ENCODE measurements at regions of chr3 and their contacts with region 1.

Region 1: GRCh38 chr3:33993631-33994030 is 195.2 kb downstream of the PDCD6IP start:
- DNase-seq: no peak
- ATAC-seq: no peak
- H3K4me3 ChIP-seq: no peak overlapping the region
- H3K27ac ChIP-seq: no peak overlapping the region
- H3K4me1 ChIP-seq: no peaks in the 10 kb centered on the region
- H3K27me3 ChIP-seq: no peaks in the 10 kb centered on the region
- CTCF ChIP-seq: no peak
- EP300 ChIP-seq: no peak
- POLR2A ChIP-seq: no peak
- RAD21 ChIP-seq: no peak

Region 2: DNA sequence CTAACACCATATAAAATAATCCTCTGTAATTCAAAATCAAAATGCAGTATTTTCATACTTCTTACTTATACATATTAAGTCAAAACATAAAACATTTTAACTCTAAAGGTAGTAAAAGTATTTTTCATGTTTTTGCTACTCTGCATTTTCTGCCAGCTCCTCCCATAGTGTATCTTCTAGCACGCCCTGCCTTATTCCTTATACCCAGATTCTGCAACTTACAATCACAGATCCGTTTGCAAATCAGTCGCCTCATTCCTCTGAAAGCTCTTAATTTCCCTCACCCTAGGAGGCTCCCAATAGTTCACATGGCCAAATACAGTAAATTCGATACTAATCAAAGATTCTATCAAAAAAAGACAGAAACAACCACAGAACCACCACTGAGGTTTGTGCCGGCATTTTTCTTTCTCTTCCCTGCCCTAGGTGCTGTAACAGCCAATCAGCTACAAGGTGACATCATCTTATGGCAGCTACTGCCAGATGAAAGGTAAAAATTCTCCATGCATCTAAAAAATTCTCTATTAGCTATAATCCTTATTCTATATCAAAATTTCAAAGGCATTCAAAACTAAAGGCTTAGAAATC is 348.5 kb before region 1 on chr3:
- CTCF ChIA-PET with region 1: no interaction called
- POLR2A ChIA-PET with region 1: no interaction called
- RAD21 ChIA-PET with region 1: no interaction called
- SMC1A ChIA-PET with region 1: no interaction called
- in situ Hi-C with region 1: no loop called
- intact Hi-C with region 1: no loop called
- DNase-seq: no peak
- ATAC-seq: no peak
- H3K4me3 ChIP-seq: no peak overlapping the region
- H3K27ac ChIP-seq: no peak overlapping the region
- H3K4me1 ChIP-seq: no peaks in the 10 kb centered on the region
- H3K27me3 ChIP-seq: no peaks in the 10 kb centered on the region
- CTCF ChIP-seq: no peak
- EP300 ChIP-seq: no peak
- POLR2A ChIP-seq: no peak
- RAD21 ChIP-seq: no peak

Region 3: DNA sequence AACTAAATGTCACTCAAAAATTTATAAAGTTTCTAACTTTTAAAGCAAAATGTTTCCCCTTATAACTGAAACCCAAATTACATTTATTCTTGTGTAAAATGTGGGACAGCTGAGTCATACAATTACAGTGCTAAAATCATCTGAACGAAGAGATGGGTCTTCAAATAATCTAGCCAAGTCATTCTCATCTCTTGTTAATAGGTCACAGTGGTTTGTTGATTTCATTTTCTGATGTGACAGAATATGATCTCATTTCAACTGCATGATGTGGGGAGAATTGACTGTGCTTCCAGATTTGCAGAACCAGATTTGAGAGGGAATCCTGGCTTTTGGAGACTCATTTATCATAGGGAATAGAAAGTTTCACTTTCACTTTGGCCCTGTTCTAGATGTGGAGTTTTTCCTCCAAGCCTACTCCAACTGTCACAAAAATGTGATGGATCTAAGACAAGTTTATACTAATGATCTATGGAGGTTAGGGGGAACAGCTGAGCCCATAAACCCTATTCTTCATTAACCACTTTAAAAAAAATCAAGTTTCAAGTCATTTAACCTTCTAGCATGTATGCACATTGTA is 489.8 kb after region 1 on chr3:
- CTCF ChIA-PET with region 1: no interaction called
- POLR2A ChIA-PET with region 1: no interaction called
- RAD21 ChIA-PET with region 1: no interaction called
- SMC1A ChIA-PET with region 1: no interaction called
- in situ Hi-C with region 1: no loop called
- intact Hi-C with region 1: loop called (anchors 10 kb)
- DNase-seq: no peak
- ATAC-seq: no peak
- H3K4me3 ChIP-seq: no peak overlapping the region
- H3K27ac ChIP-seq: no peak overlapping the region
- H3K4me1 ChIP-seq: no peaks in the 10 kb centered on the region
- H3K27me3 ChIP-seq: no peaks in the 10 kb centered on the region
- CTCF ChIP-seq: no peak
- EP300 ChIP-seq: no peak
- POLR2A ChIP-seq: no peak
- RAD21 ChIP-seq: no peak

Region 4: GRCh38 chr3:34619990-34620389 is 626.4 kb after region 1 on chr3:
- CTCF ChIA-PET with region 1: no interaction called
- POLR2A ChIA-PET with region 1: no interaction called
- RAD21 ChIA-PET with region 1: no interaction called
- SMC1A ChIA-PET with region 1: no interaction called
- in situ Hi-C with region 1: no loop called
- intact Hi-C with region 1: no loop called
- DNase-seq: no peak
- ATAC-seq: no peak
- H3K4me3 ChIP-seq: no peak overlapping the region
- H3K27ac ChIP-seq: no peak overlapping the region
- H3K4me1 ChIP-seq: no peaks in the 10 kb centered on the region
- H3K27me3 ChIP-seq: no peaks in the 10 kb centered on the region
- CTCF ChIP-seq: no peak
- EP300 ChIP-seq: no peak
- POLR2A ChIP-seq: no peak
- RAD21 ChIP-seq: peak; percentile 25; the same call in 1 of the 2 replicates

Region 5: DNA sequence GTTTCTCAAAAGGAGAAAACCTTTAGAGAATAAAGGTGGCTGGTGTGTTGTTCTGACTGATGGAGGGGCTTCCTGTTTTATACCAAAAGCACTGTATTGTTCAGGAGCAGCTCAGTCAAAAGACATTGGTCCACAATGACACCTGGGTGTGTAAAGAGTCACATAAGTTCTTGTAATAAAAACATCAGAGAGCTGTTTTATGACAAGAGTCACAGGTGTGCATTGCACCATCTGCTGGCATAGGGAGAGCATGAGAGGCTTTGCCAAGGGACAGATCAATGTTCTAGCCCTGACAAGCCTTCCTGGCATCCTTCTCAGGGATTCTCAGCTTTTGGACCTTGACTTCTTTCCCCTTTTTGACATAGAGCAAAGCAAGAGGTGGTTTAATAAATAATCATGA is 1666.1 kb after region 1 on chr3:
- CTCF ChIA-PET with region 1: no interaction called
- POLR2A ChIA-PET with region 1: no interaction called
- RAD21 ChIA-PET with region 1: no interaction called
- SMC1A ChIA-PET with region 1: no interaction called
- in situ Hi-C with region 1: no loop called
- intact Hi-C with region 1: no loop called
- DNase-seq: no peak
- ATAC-seq: peak; percentile 60; the same call in 2 of the 3 replicates
- H3K4me3 ChIP-seq: no peak overlapping the region
- H3K27ac ChIP-seq: no peak overlapping the region
- H3K4me1 ChIP-seq: peaks cover 4% of the 10 kb centered on the region; the same call in 1 of the 2 replicates
- H3K27me3 ChIP-seq: peaks cover 0 to 2% of the 10 kb centered on the region in 2 experiments; a peak in 1 of 4 replicates
- CTCF ChIP-seq: peak; percentile 29 to 49 (median 37); a peak in 5 of 6 replicates
- EP300 ChIP-seq: no peak
- POLR2A ChIP-seq: no peak
- RAD21 ChIP-seq: peak; percentile 70